Tibial artery (tissue), 4 donors: ENCODE measurements at regions of chr15 and their contacts with region 1.

Region 1: DNA sequence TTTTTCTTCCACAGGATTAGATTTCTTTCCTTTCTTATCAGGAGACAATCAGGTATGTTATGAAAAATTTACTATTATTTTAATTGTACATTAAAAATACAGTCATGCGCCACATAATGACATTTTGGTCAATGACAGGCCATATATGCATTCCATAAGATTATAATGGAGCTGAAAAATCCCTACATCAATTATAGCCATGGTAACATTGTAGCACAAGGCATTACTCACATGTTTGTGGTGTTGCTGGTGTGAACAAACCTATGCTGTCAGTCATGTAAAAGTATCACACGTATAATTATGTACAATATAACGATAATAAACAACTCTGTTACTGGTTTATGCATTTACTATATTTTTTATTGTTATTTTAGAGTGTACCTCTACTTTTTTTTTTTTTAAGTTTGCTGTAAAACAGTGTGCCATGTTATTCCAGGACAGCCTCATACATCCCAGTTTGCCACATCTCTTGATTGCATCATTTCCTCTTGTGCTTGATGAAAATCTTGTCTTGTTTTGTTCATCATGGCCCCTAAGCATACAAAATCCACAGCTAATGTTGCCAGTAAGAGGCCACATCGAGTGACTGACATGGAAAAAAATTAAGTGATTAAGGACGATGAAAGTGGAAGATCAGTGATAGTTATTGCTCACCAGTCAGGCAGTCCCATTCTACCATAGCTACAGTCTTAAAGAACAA is 21.4 kb downstream of the CALML4 start:
- DNase-seq: no peak
- H3K4me3 ChIP-seq: no peak overlapping the region
- H3K27ac ChIP-seq: no peak overlapping the region
- H3K4me1 ChIP-seq: peaks cover 0 to 28% (median 21%) of the 10 kb centered on the region in 4 donors
- H3K27me3 ChIP-seq: no peaks in the 10 kb centered on the region
- CTCF ChIP-seq: no peak

Region 2: DNA sequence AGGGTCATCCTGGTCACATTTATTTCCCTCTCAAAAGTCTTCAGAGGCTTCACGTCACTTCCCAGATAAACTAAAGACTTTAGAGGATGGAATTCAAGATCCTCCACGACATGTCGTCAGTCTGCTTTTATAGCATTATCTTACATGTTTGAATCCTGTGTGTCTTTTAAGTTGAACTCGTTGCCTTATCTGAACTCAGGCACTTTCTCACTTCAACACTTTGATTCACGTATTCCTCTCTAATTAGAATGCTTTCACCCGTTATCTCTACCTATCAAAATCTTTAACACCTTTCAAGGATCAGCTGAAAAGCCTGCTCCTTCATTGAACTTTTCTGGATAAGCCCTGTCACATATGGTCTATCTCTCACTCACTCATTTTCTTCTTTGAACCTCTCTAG is 544.2 kb before region 1 on chr15:
- intact Hi-C with region 1: loop called (anchors 5 kb)
- DNase-seq: no peak
- H3K4me3 ChIP-seq: no peak overlapping the region
- H3K27ac ChIP-seq: no peak overlapping the region
- H3K4me1 ChIP-seq: no peaks in the 10 kb centered on the region
- H3K27me3 ChIP-seq: no peaks in the 10 kb centered on the region
- CTCF ChIP-seq: no peak

Region 3: GRCh38 chr15:68492855-68493254 is 309.1 kb after region 1 on chr15:
- intact Hi-C with region 1: no loop called
- DNase-seq: peak; percentile 63 to 70
- H3K4me3 ChIP-seq: no peak overlapping the region
- H3K27ac ChIP-seq: peak overlapping the region; percentile 14 to 45
- H3K4me1 ChIP-seq: peaks cover 0 to 22% (median 16%) of the 10 kb centered on the region in 4 donors
- H3K27me3 ChIP-seq: no peaks in the 10 kb centered on the region
- CTCF ChIP-seq: no peak